ENCODE measurements at regions of chr2 and their contacts with region 1.

Region 1: GRCh38 chr2:7026742-7027141 is 109.5 kb downstream of the RNF144A start:
- DNase-seq: peak in 1 of 2 donors; percentile 63
- ATAC-seq: peak; percentile 25 to 78 (median 58)
- H3K4me3 ChIP-seq: no peak overlapping the region
- H3K27ac ChIP-seq: peak overlapping the region in 9 of 10 donors; percentile 56 to 87 (median 75)
- H3K4me1 ChIP-seq: peaks cover 21 to 86% (median 62%) of the 10 kb centered on the region in 9 donors
- H3K27me3 ChIP-seq: no peaks in the 10 kb centered on the region
- CTCF ChIP-seq: no peak

Region 2: GRCh38 chr2:6896930-6897759 is 129.6 kb before region 1 on chr2:
- intact Hi-C with region 1: loop called in 2 of 10 experiments (anchors 5 kb)
- DNase-seq: no peak
- ATAC-seq: peak in 6 of 8 donors; percentile 18 to 81 (median 64)
- H3K4me3 ChIP-seq: no peak overlapping the region
- H3K27ac ChIP-seq: peak overlapping the region in 3 of 10 donors; percentile 2 to 23 (median 11)
- H3K4me1 ChIP-seq: peaks cover 0 to 14% (median 0%) of the 10 kb centered on the region in 9 donors
- H3K27me3 ChIP-seq: no peaks in the 10 kb centered on the region
- CTCF ChIP-seq: peak; percentile 48 to 82 (median 76)

Region 3: GRCh38 chr2:6960659-6961058 is 66.1 kb before region 1 on chr2:
- intact Hi-C with region 1: no loop called
- DNase-seq: no peak
- ATAC-seq: peak in 7 of 8 donors; percentile 50 to 74 (median 55)
- H3K4me3 ChIP-seq: no peak overlapping the region
- H3K27ac ChIP-seq: peak overlapping the region in 4 of 10 donors; percentile 41 to 53 (median 46)
- H3K4me1 ChIP-seq: peaks cover 3 to 55% (median 38%) of the 10 kb centered on the region in 9 donors
- H3K27me3 ChIP-seq: no peaks in the 10 kb centered on the region
- CTCF ChIP-seq: no peak

Region 4: GRCh38 chr2:6986301-6987176 is 40.2 kb before region 1 on chr2:
- intact Hi-C with region 1: loop called in 1 of 10 experiments (anchors 5 kb)
- DNase-seq: no peak
- ATAC-seq: peak in 7 of 8 donors; percentile 10 to 61 (median 37)
- H3K4me3 ChIP-seq: no peak overlapping the region
- H3K27ac ChIP-seq: peak overlapping the region in 9 of 10 donors; percentile 37 to 75 (median 59)
- H3K4me1 ChIP-seq: peaks cover 17 to 67% (median 43%) of the 10 kb centered on the region in 9 donors
- H3K27me3 ChIP-seq: no peaks in the 10 kb centered on the region
- CTCF ChIP-seq: no peak

Measured in heart right ventricle (tissue), 16 donors.